CD8-positive, alpha-beta memory T cell (primary cell): ENCODE measurements at regions of chr10 and their contacts with region 1.

Region 1: GRCh38 chr10:128064108-128064969 is 61.9 kb downstream of the MKI67 start:
- DNase-seq: peak; percentile 52 to 82 (median 68)
- H3K4me3 ChIP-seq: peak overlapping the region; percentile 53
- H3K4me3 Mint-ChIP-seq: peak overlapping the region; percentile 63 to 86 (median 76)
- H3K27ac ChIP-seq: peak overlapping the region; percentile 45
- H3K27ac Mint-ChIP-seq: peak overlapping the region; percentile 57 to 98 (median 91)
- H3K4me1 ChIP-seq: peaks cover 58% of the 10 kb centered on the region
- H3K4me1 Mint-ChIP-seq: peaks cover 82 to 86% (median 83%) of the 10 kb centered on the region in 3 donors
- H3K27me3 ChIP-seq: no peaks in the 10 kb centered on the region
- H3K27me3 Mint-ChIP-seq: no peaks in the 10 kb centered on the region

Region 2: DNA sequence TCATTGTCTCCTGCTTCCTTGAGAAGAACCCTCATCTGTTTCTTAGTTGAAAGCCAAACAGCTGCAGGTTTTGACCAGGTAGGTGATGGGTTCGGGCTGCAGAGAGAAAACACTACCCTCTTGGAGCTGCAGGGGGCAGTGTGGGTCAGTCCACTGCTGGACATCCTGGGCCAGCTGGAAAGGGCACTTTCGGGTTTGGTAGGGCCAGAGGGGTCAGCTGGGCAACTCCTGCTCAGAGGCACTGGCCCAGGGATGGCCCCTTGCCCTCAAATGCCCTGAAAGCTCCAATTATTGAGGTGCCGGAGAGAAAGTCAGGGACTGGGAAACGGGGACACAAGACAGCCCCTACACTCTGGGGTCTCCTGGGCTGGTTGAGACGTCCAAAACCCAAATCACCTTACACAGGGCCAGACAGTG is 28.8 kb before region 1 on chr10:
- CTCF ChIA-PET with region 1: interaction called, 242 read pairs
- POLR2A ChIA-PET with region 1: interaction called, 6 read pairs
- DNase-seq: peak; percentile 52 to 69 (median 59)
- H3K4me3 ChIP-seq: no peak overlapping the region
- H3K4me3 Mint-ChIP-seq: no peak overlapping the region
- H3K27ac ChIP-seq: no peak overlapping the region
- H3K27ac Mint-ChIP-seq: no peak overlapping the region
- H3K4me1 ChIP-seq: no peaks in the 10 kb centered on the region
- H3K4me1 Mint-ChIP-seq: peaks cover 0 to 6% (median 3%) of the 10 kb centered on the region in 3 donors
- H3K27me3 ChIP-seq: no peaks in the 10 kb centered on the region
- H3K27me3 Mint-ChIP-seq: no peaks in the 10 kb centered on the region